Left lung (tissue), 14 donors: ENCODE measurements at regions of chr1 and their contacts with region 1.

Region 1: GRCh38 chr1:100606438-100606837 is 68.5 kb downstream of the GPR88 start:
- DNase-seq: peak in 3 of 4 donors; percentile 34 to 71 (median 47)
- ATAC-seq: peak; percentile 82
- H3K4me3 ChIP-seq: no peak overlapping the region
- H3K27ac ChIP-seq: no peak overlapping the region
- H3K4me1 ChIP-seq: no peaks in the 10 kb centered on the region
- H3K27me3 ChIP-seq: no peaks in the 10 kb centered on the region
- CTCF ChIP-seq: peak; percentile 44 to 48

Region 2: DNA sequence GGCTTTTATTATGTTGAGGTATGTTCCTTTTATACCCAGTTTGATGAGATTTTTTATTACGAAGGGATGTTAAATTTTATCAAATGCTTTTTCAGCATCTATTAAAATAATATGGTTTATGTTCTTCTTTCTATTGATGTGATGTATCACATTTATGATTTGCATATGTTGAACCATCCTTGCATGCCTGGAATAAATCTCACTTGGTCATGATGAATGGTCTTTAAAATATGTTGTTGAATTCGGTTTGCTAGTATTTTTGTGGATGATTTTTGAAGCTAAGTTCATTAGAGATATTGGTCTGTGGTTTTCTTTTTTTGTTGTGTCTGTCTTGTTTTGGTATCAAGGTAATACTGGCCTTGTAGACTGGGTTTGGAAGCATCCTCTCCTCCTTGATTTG is 54.4 kb before region 1 on chr1:
- intact Hi-C with region 1: no loop called
- DNase-seq: no peak
- ATAC-seq: no peak
- H3K4me3 ChIP-seq: no peak overlapping the region
- H3K27ac ChIP-seq: no peak overlapping the region
- H3K4me1 ChIP-seq: no peaks in the 10 kb centered on the region
- H3K27me3 ChIP-seq: no peaks in the 10 kb centered on the region
- CTCF ChIP-seq: no peak

Region 3: DNA sequence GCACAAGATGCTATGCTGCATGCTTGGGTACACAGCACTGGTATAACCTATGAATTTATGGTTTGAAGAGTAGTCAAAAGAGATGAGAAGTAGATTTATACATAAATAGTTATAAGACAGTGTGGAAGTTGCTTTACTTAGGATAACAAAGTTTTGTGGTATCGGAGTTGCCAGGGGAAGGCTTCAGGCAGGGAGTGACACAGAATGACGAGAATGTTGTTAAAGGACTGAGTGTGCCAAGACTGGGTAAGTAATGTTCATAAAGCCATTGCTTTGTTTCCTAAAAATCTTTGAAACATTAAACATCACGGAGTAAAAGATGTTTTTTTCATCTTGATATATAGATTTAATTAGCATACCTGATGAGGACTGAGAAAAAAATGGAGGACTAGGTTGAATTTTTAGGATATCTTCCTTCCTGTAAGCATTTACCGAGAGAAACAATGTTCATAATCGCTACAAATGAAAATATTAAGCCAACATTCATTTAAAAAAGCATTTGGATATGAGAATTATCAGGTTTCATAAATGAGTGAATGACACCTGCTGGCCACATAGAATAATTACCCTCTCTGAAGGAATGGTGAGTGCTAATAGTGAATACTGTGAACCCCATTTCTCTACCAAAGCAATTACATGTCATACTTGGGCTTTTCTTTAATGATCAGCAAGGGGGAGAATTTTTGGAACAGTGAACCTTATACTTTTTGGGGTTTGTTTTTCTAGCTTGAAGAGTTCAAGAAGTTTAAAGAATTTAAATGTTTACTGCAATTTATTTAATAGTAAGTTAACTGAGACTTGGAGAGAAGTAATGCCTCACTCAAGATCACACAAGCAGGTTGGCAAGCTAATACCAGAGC is 259.8 kb after region 1 on chr1:
- intact Hi-C with region 1: loop called in 1 of 2 experiments (anchors 5 kb)
- DNase-seq: peak in 2 of 4 donors; percentile 40 to 55
- ATAC-seq: peak; percentile 77
- H3K4me3 ChIP-seq: no peak overlapping the region
- H3K27ac ChIP-seq: no peak overlapping the region
- H3K4me1 ChIP-seq: peaks cover 0 to 3% of the 10 kb centered on the region in 2 donors
- H3K27me3 ChIP-seq: no peaks in the 10 kb centered on the region
- CTCF ChIP-seq: peak; percentile 50 to 51